Posterior vena cava (tissue), 2 donors: ENCODE measurements at regions of chr2 and their contacts with region 1.

Region 1: GRCh38 chr2:217585362-217585761 is 417.4 kb downstream of the TNS1 start:
- DNase-seq: no peak

Region 2: GRCh38 chr2:217611626-217612126 is 26.3 kb after region 1 on chr2:
- intact Hi-C with region 1: loop called in 1 of 2 experiments (anchors 2 kb)
- DNase-seq: no peak

Region 3: GRCh38 chr2:217625557-217626169 is 40.3 kb after region 1 on chr2:
- intact Hi-C with region 1: no loop called
- DNase-seq: no peak

Region 4: DNA sequence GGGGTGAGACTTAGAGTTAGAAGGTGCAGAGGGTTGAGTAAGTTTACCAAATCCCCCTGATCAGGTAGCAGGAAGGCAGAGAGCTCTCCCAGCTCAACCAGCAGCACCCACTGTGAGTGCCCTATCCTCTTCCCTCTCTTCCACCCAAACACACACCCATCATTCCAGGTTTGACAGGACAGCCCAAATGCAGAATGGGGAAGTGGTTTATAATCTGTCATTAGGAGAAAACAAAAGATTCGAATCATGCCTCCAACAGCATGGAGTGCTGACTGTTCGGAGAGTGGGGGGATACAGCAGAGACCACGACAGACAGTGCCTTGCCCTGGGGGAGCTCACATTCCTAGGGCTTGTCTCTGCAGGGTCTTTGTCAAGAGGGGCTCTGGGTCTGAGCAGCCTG is 552.2 kb after region 1 on chr2:
- intact Hi-C with region 1: no loop called
- DNase-seq: no peak